ENCODE measurements at regions of chr11 and their contacts with region 1.

Region 1: DNA sequence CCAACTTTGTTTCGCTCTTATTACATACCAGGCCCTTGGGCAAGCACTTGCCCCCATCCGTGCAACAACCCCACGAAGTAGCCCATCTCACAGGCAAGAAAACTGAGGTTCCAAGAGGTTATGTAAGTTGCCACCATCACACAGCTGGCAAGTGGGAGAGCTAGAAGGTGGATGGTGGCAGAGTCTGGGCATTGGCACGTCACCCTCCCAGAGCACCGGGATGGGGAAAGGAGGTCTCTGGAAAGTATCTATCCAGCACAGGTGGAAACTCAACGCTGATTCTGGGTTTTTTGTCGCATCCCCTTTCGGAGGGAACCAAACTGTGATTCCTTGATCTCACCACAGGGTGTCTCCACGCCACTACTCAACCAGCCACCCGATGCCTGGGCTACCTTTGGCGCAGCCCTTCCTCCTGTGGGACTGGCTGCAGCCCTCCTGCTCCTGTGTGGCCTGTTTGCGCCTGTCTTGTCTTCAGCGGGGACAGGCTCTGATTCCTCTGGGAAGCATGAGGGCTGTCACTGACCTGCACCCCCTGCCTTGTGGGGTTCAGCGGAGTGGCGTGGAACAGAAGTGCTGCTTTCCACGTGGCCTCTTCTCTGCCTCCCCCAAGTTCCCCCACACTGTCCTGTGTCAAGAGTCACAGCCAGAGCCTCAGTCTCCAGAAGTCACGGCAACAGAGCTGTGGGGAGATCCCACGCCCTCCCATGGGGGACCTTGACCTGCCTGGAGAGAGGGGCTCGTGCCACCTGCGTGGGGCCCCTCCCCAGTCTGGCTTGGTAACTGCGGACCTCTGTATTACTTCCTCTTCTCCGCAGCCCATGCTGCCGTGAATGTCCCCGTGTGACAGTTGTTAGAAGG is 34.4 kb upstream of the TRIM29 start:
- DNase-seq: peak; percentile 63
- ATAC-seq: peak; percentile 73
- H3K4me3 ChIP-seq: no peak overlapping the region
- H3K27ac ChIP-seq: no peak overlapping the region
- H3K4me1 ChIP-seq: peaks cover 19% of the 10 kb centered on the region
- H3K27me3 ChIP-seq: peaks cover 6 to 23% of the 10 kb centered on the region in 2 experiments; a peak in 4 of 5 replicates
- CTCF ChIP-seq: peak; percentile 97
- EP300 ChIP-seq: no peak
- POLR2A ChIP-seq: no peak
- RAD21 ChIP-seq: peak; percentile 98

Region 2: DNA sequence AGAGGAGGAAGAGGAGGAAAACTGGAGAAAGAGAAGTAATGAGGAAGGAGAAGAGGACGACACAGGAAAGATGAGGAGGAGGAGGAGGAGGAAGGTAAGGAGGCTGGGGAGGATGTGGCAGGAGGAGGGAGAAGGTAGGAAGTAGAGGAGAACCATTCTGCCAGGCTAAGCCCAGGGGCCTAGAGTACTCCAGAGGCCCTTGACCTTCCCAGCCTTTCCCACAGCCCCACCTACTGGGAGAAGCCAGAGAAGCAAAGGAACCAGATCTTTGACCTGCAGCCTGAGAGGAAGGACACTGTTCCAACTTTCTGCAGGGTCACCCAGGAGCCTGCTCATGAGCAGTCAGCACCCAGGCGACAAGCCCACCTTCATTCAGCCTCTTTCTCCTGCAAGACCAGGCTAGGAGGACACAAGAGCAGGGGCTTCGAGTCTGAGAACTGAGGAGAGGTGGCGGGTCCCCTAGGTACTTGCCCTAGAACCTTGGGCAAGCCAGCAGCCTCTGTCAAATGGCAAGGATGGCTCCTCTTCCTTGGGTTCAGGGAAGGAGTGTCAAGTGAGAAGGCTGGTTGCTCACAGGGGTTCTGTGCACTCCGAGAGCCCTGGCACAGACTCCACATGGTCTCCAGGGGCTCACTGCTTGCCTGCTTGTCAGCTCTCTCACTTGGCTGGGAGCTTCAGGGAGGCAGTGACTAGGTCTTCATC is 10.7 kb after region 1 on chr11:
- CTCF ChIA-PET with region 1: interaction called, 13 read pairs
- POLR2A ChIA-PET with region 1: interaction called, 5 read pairs
- in situ Hi-C with region 1: no loop called
- intact Hi-C with region 1: loop called (anchors 1 kb)
- DNase-seq: peak; percentile 73
- ATAC-seq: peak; percentile 53
- H3K4me3 ChIP-seq: peak overlapping the region in 1 of 3 experiments; percentile 41; a peak in 1 of 6 replicates
- H3K27ac ChIP-seq: peak overlapping the region; percentile 51
- H3K4me1 ChIP-seq: peaks cover 82% of the 10 kb centered on the region
- H3K27me3 ChIP-seq: no peaks in the 10 kb centered on the region
- CTCF ChIP-seq: peak; percentile 89
- EP300 ChIP-seq: no peak
- POLR2A ChIP-seq: no peak
- RAD21 ChIP-seq: peak; percentile 63

Region 3: DNA sequence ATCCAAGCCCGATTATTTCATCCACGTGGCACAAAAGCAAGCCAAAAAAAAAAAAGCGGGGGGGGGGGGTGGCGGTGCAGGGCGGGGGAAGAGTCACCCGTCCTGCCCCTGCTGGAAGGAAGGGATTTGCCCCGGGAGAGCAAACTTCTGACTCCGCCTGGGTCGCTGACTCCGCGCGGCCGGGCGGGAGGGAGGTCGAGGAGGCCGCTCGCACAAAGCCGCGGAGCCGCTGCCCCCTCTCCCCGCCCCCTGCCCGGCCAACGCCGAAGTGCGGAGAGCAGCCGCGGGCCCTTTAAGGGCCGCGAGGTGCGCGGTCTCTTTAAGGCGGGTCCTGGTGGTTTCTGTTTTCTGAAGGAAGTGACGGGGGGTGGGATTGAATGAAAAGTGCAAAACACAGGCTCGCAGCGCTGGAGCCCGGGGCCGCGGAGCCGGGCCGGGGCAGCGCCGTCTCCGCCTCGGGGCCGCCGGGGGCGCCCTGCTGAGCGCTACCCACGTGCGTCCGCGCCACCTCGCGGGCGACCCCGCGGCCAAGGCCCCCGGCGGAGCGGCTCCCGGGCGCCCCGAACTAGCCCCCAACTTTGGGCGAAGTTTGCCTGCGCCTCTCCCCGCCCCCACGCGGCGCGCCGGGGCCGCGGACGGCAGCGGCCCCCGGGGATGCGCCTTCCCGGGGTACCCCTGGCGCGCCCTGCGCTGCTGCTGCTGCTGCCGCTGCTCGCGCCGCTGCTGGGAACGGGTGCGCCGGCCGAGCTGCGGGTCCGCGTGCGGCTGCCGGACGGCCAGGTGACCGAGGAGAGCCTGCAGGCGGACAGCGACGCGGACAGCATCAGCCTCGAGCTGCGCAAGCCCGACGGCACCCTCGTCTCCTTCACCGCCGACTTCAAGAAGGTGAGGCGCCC is 38.6 kb after region 1 on chr11 and contains the start of gene OAF:
- CTCF ChIA-PET with region 1: interaction called, 3 read pairs
- POLR2A ChIA-PET with region 1: interaction called, 4 read pairs
- in situ Hi-C with region 1: no loop called
- intact Hi-C with region 1: loop called (anchors 1 kb)
- DNase-seq: peak; percentile 86
- ATAC-seq: peak; percentile 74
- H3K4me3 ChIP-seq: peak within 1 kb of the TSS; percentile 74 to 87 (median 86)
- H3K27ac ChIP-seq: peak within 1 kb of the TSS; percentile 66
- H3K4me1 ChIP-seq: peaks cover 81% of the 10 kb centered on the region
- H3K27me3 ChIP-seq: no peaks in the 10 kb centered on the region
- CTCF ChIP-seq: 0 out of 2 replicates have a peak, but pooled peaks have one; percentile 2
- EP300 ChIP-seq: peak in 1 of 2 experiments; percentile 27; a peak in 1 of 4 replicates
- POLR2A ChIP-seq: peak in 1 of 2 experiments; percentile 66; a peak in 3 of 4 replicates
- RAD21 ChIP-seq: peak; percentile 80
- total RNA-seq, gene OAF: 37.5 and 63.7 TPM in 2 replicates

Region 4: GRCh38 chr11:120229451-120230424 is 57.5 kb after region 1 on chr11:
- CTCF ChIA-PET with region 1: interaction called, 31 read pairs
- POLR2A ChIA-PET with region 1: no interaction called
- in situ Hi-C with region 1: loop called (anchors 5 kb)
- intact Hi-C with region 1: loop called (anchors 1 kb)
- DNase-seq: peak; percentile 23
- ATAC-seq: no peak
- H3K4me3 ChIP-seq: no peak overlapping the region
- H3K27ac ChIP-seq: no peak overlapping the region
- H3K4me1 ChIP-seq: no peaks in the 10 kb centered on the region
- H3K27me3 ChIP-seq: peaks cover 0 to 28% of the 10 kb centered on the region in 2 experiments; a peak in 4 of 5 replicates
- CTCF ChIP-seq: peak; percentile 73
- EP300 ChIP-seq: no peak
- POLR2A ChIP-seq: 0 out of 4 replicates have a peak, but pooled peaks of 1 of the 2 experiments have one; percentile 11
- RAD21 ChIP-seq: peak; percentile 49; the same call in 1 of the 2 replicates

Region 5: DNA sequence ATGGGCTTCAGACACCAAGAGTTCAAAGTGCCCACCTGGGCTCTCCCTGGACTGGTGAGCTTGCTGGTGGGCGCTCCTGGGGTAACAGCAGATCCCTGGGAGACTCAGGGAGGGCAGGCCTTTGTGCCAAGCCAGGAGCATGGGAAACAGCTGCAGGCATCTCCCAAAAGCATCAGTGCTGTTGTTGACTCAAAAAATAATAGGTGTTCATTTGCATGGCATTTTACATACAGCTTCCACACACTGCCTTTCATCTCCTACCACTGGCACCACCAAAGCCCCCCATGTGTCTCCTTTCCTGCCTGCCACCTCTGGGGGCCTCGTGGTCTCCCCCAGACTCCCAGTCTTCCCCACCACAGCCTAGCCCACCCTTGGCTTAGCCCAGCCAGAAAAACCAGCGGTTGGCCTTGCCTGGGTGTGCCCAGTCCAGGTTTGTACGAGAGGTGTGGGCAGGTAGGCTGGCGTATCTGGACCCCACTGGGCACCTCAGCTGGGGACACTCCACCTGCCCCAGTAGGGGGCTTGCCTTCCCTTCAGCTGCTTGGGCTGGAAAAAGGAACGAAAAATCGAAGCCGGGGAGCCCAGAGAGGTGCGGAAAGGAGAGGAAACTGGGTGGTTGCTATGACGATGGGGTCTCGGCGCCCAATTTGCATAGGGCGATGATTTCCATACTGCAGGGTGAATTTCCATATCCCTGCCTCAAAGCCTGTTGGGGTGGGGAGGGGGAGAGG is 82.7 kb after region 1 on chr11:
- CTCF ChIA-PET with region 1: no interaction called
- POLR2A ChIA-PET with region 1: no interaction called
- in situ Hi-C with region 1: no loop called
- intact Hi-C with region 1: no loop called
- DNase-seq: no peak
- ATAC-seq: no peak
- H3K4me3 ChIP-seq: no peak overlapping the region
- H3K27ac ChIP-seq: no peak overlapping the region
- H3K4me1 ChIP-seq: no peaks in the 10 kb centered on the region
- H3K27me3 ChIP-seq: peaks cover 4 to 74% of the 10 kb centered on the region in 2 experiments
- CTCF ChIP-seq: no peak
- EP300 ChIP-seq: no peak
- POLR2A ChIP-seq: no peak
- RAD21 ChIP-seq: no peak

Region 6: DNA sequence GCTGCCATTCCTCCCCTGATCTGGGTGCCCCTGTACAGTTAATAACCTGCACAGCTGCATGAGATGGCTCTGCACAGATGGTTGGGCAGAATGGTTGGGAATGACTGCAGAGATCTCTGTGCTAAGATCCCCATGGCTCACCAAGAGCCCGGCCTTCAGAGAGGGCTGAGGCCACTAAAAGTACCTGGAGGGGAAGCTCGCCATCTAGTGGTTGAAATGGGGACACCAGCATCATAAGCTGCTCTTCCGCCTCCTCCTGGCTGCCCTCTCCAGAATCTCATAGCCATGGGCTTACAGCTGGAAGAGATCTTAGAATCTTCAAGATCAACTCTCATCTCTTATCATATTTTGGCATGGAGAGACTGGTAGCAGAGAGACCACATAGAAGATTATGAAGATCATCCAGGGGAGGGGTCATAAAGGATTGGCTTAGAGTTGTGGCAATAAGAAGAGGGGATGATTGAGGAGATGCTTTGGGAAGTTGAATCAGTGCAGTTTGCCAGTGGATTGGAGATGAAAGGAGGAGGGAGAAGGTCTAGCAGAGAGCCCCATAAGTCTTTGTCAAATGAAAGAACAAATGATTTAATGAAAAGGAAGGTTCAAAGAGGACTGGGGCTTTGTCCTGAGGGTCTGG is 130.8 kb after region 1 on chr11:
- CTCF ChIA-PET with region 1: interaction called, 11 read pairs
- POLR2A ChIA-PET with region 1: no interaction called
- in situ Hi-C with region 1: loop called (anchors 5 kb)
- intact Hi-C with region 1: loop called (anchors 1 kb)
- DNase-seq: peak; percentile 69
- ATAC-seq: peak; percentile 88
- H3K4me3 ChIP-seq: no peak overlapping the region
- H3K27ac ChIP-seq: no peak overlapping the region
- H3K4me1 ChIP-seq: no peaks in the 10 kb centered on the region
- H3K27me3 ChIP-seq: peaks cover 0 to 62% of the 10 kb centered on the region in 2 experiments; a peak in 4 of 5 replicates
- CTCF ChIP-seq: peak; percentile 93
- EP300 ChIP-seq: no peak
- POLR2A ChIP-seq: no peak
- RAD21 ChIP-seq: peak; percentile 74

Measured in HepG2 (cell line).